ENCODE measurements at regions of chr11 and their contacts with region 1.

Region 1: DNA sequence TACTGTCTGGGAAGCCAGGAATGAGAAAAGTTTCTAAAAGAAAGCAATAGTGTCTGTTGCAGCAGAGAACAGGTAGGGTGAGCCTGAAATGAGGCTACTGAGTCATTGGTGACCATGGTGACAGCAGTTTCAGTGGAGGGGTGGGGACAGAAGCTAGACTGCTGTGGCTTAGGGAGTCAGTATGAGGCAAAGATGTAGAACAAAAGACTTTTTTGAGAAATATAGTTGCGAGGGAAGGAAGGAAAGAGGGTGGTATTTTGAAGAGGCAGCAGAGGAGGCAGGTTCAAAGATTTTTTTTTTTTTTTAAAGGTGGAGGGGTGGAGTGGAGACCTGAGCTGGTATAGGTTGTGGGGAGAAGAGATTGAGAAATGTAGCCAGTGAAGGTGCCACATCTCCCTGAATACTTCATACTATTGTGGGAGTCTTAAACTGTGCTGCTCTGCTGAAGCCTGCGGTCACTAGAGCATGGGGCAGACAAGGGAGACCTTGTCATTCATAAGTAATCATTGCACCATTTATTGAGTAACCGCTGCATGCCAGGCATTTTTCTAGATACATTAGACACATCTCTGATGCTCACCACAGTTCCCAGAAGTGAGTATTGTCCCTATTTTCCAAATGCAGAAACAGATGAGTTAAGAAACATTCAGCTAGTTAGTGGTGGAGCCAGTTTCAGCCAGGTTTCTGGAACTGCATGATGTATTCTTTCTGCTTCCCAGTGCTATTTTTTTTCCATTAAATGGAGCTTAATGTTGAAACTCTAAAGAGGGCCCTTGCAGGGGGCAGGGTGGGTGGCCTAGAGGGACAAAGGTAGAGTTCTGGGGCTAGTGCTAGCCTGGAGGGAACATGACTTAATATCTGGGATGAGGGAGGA is 49.9 kb downstream of the STIM1 start:
- DNase-seq: peak; percentile 89
- H3K4me3 Mint-ChIP-seq: peak overlapping the region; percentile 5
- H3K27ac Mint-ChIP-seq: peak overlapping the region; percentile 66
- H3K4me1 Mint-ChIP-seq: peaks cover 80% of the 10 kb centered on the region
- H3K27me3 Mint-ChIP-seq: no peaks in the 10 kb centered on the region

Region 2: GRCh38 chr11:3867209-3868091 is 37.9 kb before region 1 on chr11:
- CTCF ChIA-PET with region 1: interaction called, 3 read pairs
- intact Hi-C with region 1: loop called (anchors 1 kb)
- DNase-seq: peak; percentile 70
- H3K4me3 Mint-ChIP-seq: peak overlapping the region; percentile 36
- H3K27ac Mint-ChIP-seq: peak overlapping the region; percentile 87
- H3K4me1 Mint-ChIP-seq: peaks cover 81% of the 10 kb centered on the region
- H3K27me3 Mint-ChIP-seq: no peaks in the 10 kb centered on the region

Region 3: GRCh38 chr11:3880724-3881123 is 24.6 kb before region 1 on chr11:
- CTCF ChIA-PET with region 1: interaction called, 3 read pairs
- intact Hi-C with region 1: loop called (anchors 2 kb)
- DNase-seq: no peak
- H3K4me3 Mint-ChIP-seq: no peak overlapping the region
- H3K27ac Mint-ChIP-seq: peak overlapping the region; percentile 37
- H3K4me1 Mint-ChIP-seq: peaks cover 77% of the 10 kb centered on the region
- H3K27me3 Mint-ChIP-seq: no peaks in the 10 kb centered on the region

Region 4: GRCh38 chr11:3920148-3920852 is 15.0 kb after region 1 on chr11:
- CTCF ChIA-PET with region 1: interaction called, 4 read pairs
- intact Hi-C with region 1: loop called (anchors 1 kb)
- DNase-seq: peak; percentile 93
- H3K4me3 Mint-ChIP-seq: no peak overlapping the region
- H3K27ac Mint-ChIP-seq: peak overlapping the region; percentile 74
- H3K4me1 Mint-ChIP-seq: peaks cover 61% of the 10 kb centered on the region
- H3K27me3 Mint-ChIP-seq: no peaks in the 10 kb centered on the region

Region 5: DNA sequence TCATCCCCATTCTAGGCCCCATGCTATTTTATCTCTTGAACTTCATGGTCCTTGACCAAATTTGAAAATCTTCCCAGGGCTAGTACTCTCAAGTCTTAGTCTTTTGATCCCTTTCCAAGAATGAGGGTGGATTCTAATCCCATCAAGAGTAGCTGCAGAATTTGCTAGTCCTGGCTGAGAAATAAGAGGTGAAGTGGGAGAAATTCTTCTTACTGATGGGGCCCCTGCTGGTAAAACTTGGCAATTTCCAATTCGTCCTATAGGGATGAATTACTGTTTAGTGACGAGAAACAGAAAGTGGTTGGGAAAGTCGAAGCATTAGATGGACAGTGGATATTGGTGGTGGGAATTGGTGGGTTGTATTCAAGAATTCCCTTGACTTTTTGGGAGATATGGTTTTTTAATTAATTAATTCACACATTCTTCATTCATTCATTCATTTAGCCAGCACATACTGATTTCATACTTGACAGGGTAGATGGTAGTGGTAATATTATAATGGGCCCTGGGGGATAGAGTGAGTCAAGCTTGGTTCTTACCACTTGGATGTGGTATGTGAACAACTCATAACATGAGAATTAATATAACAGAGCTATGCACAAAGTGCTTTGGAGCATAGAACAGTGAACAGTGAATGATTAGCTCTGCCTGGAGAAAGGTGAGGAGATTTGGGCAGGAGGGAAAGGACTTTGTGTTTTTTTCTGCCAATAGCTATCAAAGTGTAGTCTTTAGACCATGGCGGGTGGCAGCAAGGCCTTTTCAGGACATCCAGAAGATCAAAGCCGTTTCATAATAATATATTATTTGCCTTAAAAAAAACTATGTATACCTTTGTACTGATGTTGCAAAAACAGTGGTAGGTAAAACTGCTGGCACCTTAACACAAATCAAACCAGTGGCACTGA is 54.0 kb after region 1 on chr11:
- CTCF ChIA-PET with region 1: no interaction called
- intact Hi-C with region 1: loop called (anchors 2 kb)
- DNase-seq: no peak
- H3K4me3 Mint-ChIP-seq: no peak overlapping the region
- H3K27ac Mint-ChIP-seq: no peak overlapping the region
- H3K4me1 Mint-ChIP-seq: peaks cover 79% of the 10 kb centered on the region
- H3K27me3 Mint-ChIP-seq: no peaks in the 10 kb centered on the region

Region 6: DNA sequence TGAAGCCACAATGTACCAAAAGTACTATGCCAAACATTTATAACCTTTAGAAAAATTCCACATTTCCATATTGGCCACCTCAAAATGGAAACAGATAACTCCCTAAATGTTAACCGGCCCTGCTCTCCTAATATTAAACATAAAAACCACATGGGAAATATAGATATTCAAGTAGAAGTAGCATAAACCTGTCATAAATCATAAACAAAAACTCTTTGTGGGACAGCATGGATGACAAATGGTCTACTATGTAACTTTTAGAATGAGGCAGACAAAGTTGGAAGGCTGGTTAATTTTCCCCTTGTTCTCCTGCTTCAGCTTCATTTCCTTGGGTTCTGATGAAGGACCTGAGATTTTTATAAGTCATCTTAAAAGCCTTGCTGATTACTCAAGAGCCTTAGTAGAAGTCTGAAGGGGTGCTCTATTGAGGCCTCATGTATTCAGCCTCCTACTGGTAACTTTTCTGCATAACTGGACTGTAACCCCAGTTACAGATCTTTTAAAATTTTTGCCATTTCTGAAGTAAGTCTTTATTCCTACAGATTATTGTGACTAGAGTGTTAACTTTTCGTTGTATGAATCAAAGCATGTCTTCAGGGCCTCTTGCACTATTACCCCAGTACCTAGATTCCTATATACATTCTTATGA is 66.6 kb after region 1 on chr11:
- CTCF ChIA-PET with region 1: interaction called, 5 read pairs
- intact Hi-C with region 1: loop called (anchors 1 kb)
- DNase-seq: no peak
- H3K4me3 Mint-ChIP-seq: no peak overlapping the region
- H3K27ac Mint-ChIP-seq: no peak overlapping the region
- H3K4me1 Mint-ChIP-seq: peaks cover 68% of the 10 kb centered on the region
- H3K27me3 Mint-ChIP-seq: no peaks in the 10 kb centered on the region

Region 7: DNA sequence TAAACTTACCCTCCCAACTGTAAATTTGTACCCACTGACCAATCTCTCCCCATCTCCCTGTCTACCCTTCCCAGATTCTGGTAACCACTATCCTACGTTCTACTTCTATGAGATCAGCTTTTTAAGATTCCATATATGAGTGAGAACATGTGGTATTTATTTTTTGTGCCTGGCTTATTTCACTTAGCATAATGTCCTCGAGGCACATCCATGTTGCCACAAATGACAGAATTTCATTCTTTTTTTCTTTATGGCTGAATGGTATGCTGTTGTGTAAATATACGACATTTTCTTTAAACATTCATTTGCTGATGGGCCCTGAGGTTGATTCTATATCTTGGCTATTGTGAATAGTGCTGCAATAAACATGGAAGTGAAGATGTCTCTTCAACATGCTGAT is 114.6 kb after region 1 on chr11:
- CTCF ChIA-PET with region 1: no interaction called
- intact Hi-C with region 1: no loop called
- DNase-seq: no peak
- H3K4me3 Mint-ChIP-seq: no peak overlapping the region
- H3K27ac Mint-ChIP-seq: peak overlapping the region; percentile 11
- H3K4me1 Mint-ChIP-seq: peaks cover 38% of the 10 kb centered on the region
- H3K27me3 Mint-ChIP-seq: no peaks in the 10 kb centered on the region

Region 8: DNA sequence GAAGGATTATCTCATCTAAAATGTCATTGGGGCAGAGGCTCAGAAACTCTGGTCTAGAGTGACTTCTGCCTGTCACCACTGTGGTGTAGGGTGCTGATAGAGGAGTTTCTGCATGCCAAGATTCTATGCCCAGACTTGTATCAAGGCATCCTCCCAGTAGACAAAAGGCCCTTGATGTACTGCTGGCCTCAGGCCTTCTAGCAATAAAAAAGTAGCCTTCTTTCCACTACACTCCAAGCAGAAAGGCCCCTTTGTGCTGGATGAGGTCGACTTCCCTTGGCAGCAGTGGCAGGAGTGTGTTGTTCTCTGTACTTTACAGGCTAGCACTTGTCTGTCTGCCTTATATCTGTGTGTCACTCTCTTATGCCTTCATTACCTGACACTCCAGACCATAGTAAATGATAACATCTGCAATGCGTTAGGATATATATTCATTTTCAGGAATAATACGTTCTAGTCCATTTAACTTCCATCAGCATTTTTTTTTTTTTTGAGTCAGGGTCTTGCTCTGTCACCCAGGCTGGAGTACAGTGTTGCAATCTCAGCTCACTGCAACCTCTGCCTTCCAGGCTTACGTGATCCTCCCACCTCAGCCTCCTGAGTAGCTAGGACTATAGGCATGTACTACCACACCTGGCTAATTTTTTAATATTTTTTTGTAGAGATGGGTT is 139.8 kb after region 1 on chr11:
- CTCF ChIA-PET with region 1: no interaction called
- intact Hi-C with region 1: no loop called
- DNase-seq: no peak
- H3K4me3 Mint-ChIP-seq: no peak overlapping the region
- H3K27ac Mint-ChIP-seq: no peak overlapping the region
- H3K4me1 Mint-ChIP-seq: peaks cover 25% of the 10 kb centered on the region
- H3K27me3 Mint-ChIP-seq: no peaks in the 10 kb centered on the region

Measured in activated naive CD4-positive, alpha-beta T cell treated with anti-CD3 and anti-CD28 coated beads for 36 hours (primary cell).